Sigmoid colon (tissue), 7 donors: ENCODE measurements at regions of chr10 and their contacts with region 1.

Region 1: DNA sequence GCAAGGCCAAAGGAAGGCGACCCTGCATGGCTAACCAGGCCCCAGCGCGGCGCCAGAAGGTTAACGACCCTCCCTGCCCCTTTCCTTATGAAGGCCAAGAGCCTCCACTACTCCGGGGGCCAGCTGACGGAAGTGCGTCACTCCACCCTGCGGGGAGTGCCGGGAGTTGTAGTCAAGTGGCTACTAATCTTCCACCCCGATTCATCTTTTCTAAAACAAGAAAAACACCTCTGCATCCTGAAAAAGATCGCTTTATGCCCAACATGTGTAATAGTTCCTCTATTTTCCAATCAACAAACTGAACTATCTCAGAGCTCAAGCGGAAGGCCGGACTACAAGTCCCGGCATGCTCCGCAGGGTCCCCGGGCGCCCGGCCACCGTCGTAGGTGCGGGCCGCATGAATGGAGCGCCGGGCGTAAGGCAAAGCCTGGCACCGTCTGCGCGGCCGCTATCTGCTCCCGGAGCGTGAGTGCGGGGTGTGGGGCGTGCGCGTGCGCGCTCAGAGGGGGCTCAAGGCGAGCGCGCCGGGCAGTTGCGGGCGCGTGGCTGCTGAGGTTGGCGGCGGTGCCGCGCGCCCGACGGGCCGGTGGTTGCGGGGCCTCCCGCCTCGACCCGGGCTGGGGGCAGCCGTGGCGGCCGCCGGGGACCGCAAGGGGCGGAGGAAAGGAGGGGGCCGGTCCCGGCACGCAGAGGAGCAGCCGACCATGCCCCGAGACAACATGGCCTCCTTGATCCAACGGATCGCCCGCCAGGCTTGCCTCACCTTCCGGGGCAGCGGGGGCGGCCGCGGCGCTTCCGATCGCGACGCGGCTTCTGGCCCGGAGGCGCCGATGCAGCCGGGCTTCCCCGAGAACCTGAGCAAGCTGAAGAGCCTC is at the start of gene ADO:
- DNase-seq: peak; percentile 93
- H3K4me3 ChIP-seq: peak within 1 kb of the TSS; percentile 78 to 85 (median 78)
- H3K27ac ChIP-seq: peak within 1 kb of the TSS; percentile 91 to 95 (median 94)
- H3K4me1 ChIP-seq: peaks cover 0 to 40% (median 38%) of the 10 kb centered on the region in 4 donors
- H3K27me3 ChIP-seq: no peaks in the 10 kb centered on the region
- CTCF ChIP-seq: no peak
- EP300 ChIP-seq: peak in 1 of 4 donors; percentile 38
- POLR2A ChIP-seq: peak; percentile 6 to 31
- total RNA-seq, gene ADO: 13.0 to 18.9 (median 18.0) TPM

Region 2: GRCh38 chr10:62437696-62438095 is 366.9 kb before region 1 on chr10:
- intact Hi-C with region 1: loop called (anchors 5 kb)
- DNase-seq: no peak
- H3K4me3 ChIP-seq: no peak overlapping the region
- H3K27ac ChIP-seq: peak overlapping the region in 1 of 4 donors; percentile 42
- H3K4me1 ChIP-seq: peaks cover 0 to 31% (median 21%) of the 10 kb centered on the region in 4 donors
- H3K27me3 ChIP-seq: no peaks in the 10 kb centered on the region
- CTCF ChIP-seq: peak; percentile 43 to 85 (median 66)
- EP300 ChIP-seq: peak in 1 of 4 donors; percentile 11
- POLR2A ChIP-seq: no peak

Region 3: GRCh38 chr10:62816331-62817120 is 11.9 kb after region 1 on chr10 and contains the start of gene EGR2:
- intact Hi-C with region 1: loop called (anchors 2 kb)
- DNase-seq: peak; percentile 97
- H3K4me3 ChIP-seq: peak within 1 kb of the TSS; percentile 64 to 88 (median 78)
- H3K27ac ChIP-seq: peak within 1 kb of the TSS; percentile 79 to 95 (median 88)
- H3K4me1 ChIP-seq: peaks cover 0 to 41% (median 38%) of the 10 kb centered on the region in 4 donors
- H3K27me3 ChIP-seq: peaks cover 13 to 51% (median 24%) of the 10 kb centered on the region in 3 donors
- CTCF ChIP-seq: no peak
- EP300 ChIP-seq: no peak
- POLR2A ChIP-seq: no peak
- total RNA-seq, gene EGR2: 1.7 to 3.4 (median 1.8) TPM

Region 4: GRCh38 chr10:63133056-63133820 is 328.6 kb after region 1 on chr10 and contains the start of gene NRBF2:
- intact Hi-C with region 1: loop called (anchors 5 kb)
- DNase-seq: peak; percentile 99
- H3K4me3 ChIP-seq: peak within 1 kb of the TSS; percentile 82 to 93 (median 86)
- H3K27ac ChIP-seq: peak within 1 kb of the TSS; percentile 90 to 92 (median 91)
- H3K4me1 ChIP-seq: peaks cover 0 to 33% (median 27%) of the 10 kb centered on the region in 4 donors
- H3K27me3 ChIP-seq: no peaks in the 10 kb centered on the region
- CTCF ChIP-seq: peak in 1 of 4 experiments; percentile 19
- EP300 ChIP-seq: no peak
- POLR2A ChIP-seq: peak; percentile 92 to 93
- total RNA-seq, gene NRBF2: 12.7 to 15.0 (median 13.8) TPM

Region 5: DNA sequence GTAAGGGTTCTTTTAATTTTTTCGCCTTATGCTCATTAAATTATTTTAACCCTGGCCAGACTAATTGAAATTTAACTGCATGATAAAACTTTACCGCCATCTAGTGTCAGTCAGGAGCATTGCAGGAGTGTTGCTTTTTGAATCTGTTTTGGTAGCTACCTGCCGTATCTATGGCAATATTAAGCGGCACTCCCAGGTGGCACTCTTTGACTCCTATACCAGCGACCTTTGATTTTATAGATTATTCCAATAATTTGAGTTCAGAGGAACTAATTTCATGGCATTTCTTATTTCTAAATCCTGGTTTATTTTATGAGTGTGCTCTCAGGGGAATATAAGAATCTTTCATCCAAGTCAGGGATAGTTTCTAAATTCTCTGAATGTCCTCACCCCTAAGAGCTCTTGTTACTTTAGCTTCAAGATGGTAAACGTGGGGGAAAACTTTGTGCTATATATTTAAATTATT is 915.5 kb after region 1 on chr10:
- intact Hi-C with region 1: loop called (anchors 10 kb)
- DNase-seq: no peak
- H3K4me3 ChIP-seq: no peak overlapping the region
- H3K27ac ChIP-seq: peak overlapping the region; percentile 33 to 78 (median 60)
- H3K4me1 ChIP-seq: peaks cover 0 to 24% (median 16%) of the 10 kb centered on the region in 4 donors
- H3K27me3 ChIP-seq: no peaks in the 10 kb centered on the region
- CTCF ChIP-seq: peak; percentile 84 to 98 (median 94)
- EP300 ChIP-seq: no peak
- POLR2A ChIP-seq: no peak